GM23248 (cell line): ENCODE measurements at regions of chr15 and their contacts with region 1.

Region 1: DNA sequence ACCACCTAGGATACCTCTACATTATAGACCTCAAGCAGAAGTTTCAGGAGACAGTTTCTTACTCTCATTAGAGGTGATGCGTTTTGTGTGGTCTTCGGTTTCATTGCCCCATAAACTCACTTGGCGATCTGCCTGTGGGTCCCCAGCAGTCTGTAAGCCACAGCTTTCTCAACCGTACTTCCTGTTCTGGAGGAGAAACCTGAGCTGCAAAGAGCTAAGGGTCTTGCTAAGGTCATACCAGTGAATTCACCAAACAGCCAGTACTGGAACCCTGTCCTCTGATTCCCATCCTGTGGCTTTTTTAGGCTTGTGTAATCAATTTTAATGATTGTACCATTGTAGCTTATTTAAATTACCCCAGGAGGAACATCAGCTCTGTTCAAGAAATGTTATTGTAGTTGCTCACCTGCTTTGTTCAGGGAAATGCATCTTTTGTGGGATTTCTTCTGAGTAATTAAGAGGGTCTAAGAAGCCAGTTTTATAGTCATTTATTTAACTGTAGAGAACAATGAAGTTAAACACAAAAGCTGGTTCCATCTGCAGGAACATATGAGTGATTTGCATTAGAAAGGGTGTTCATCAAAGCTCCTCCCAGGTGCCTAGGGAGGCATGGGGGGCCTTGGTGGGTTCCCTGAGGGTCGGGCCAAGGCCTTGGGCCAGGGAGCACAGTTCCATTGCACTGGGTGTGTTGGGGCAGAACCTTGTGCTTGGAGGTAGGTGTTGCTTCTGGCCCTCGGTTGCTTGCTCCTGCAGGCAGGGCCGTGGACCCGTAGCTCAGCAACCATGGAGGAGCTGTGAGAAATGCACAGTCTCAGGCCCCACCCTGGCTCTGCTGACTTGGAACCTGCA is 69.6 kb downstream of the APBA2 start:
- DNase-seq: no peak
- H3K4me3 ChIP-seq: no peak overlapping the region
- H3K27ac ChIP-seq: no peak overlapping the region
- H3K4me1 ChIP-seq: no peaks in the 10 kb centered on the region
- H3K27me3 ChIP-seq: no peaks in the 10 kb centered on the region

Region 2: GRCh38 chr15:28896951-28897350 is 58.4 kb before region 1 on chr15:
- in situ Hi-C with region 1: loop called (anchors 10 kb)
- DNase-seq: peak; percentile 37
- H3K4me3 ChIP-seq: no peak overlapping the region
- H3K27ac ChIP-seq: no peak overlapping the region
- H3K4me1 ChIP-seq: no peaks in the 10 kb centered on the region
- H3K27me3 ChIP-seq: no peaks in the 10 kb centered on the region